Activated CD4-positive, alpha-beta memory T cell treated with anti-CD3 and anti-CD28 coated beads, Interleukin-2, amount 10 ng/mL, durations not matched to agents 7 days and 5 days (primary cell): ENCODE measurements at regions of chr15 and their contacts with region 1.

Region 1: DNA sequence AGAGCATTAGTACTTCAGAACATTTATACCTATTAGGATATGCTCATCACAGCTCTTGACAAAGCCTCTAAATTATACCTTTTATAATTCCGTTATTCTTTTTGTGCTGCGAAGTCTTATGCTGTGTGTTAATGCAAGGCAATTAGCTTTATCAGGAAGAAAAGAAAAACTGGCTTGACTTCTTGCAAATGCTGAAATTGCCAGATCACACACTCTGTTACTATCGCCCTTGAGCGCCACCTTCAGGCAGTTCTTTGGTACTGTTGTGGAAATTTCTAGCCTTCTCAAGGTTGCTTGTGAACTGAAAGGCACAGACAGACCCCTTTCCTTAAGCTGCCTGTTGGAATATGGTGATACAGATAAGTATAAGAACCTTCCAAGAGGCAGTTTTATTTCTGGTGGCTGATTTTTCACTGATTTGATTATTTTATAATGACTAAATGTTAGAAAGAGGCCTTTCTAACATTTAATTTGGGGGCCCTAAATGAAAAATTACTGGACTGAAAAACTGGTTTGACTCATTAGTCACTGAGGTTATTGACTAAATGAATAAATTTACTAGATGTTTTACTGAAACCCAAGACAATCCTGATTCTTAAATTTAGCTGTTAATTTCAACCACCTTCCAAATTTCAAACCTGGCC is 126.2 kb upstream of the RASGRP1 start:
- DNase-seq: peak; percentile 86
- H3K4me3 Mint-ChIP-seq: no peak overlapping the region
- H3K27ac Mint-ChIP-seq: peak overlapping the region; percentile 99
- H3K4me1 Mint-ChIP-seq: peaks cover 92% of the 10 kb centered on the region
- H3K27me3 Mint-ChIP-seq: no peaks in the 10 kb centered on the region

Region 2: DNA sequence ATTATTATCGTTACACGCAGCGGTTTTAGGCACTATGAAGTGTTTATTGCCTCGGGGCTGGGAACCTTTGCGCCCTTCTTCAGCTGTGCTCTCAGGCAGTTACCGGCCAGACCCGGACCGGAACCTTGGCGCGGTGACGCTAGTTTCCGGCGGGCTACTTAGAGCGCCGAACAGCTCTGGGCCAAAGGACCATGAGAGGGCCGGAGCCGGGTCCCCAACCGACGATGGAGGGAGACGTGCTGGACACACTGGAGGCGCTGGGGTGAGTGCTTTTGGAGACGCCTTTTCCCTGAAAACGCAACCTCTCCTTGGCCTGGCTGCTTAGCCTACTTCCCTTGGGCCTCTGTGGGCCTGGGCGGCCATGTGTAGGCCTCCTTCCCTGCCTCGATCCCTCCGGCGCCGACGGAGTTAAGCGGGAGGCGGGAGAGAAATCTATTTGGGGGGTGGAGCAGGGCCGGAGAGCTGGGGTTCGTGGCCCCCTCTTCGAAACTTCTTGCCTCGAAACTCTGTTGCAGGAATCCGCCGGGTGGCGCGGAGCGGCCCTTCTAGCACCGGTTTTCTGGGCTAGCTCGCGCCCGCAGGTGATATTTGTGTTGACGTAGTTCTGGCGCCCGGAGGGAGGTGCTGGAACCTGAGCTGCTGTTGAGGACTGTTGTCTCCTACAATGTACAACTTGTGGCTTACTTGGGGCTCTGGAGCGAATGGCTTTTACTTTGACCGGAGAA is 236.7 kb before region 1 on chr15 and contains the start of gene FAM98B:
- CTCF ChIA-PET with region 1: interaction called, 67 read pairs
- POLR2A ChIA-PET with region 1: interaction called, 47 read pairs
- DNase-seq: peak; percentile 89
- H3K4me3 Mint-ChIP-seq: peak within 1 kb of the TSS; percentile 93
- H3K27ac Mint-ChIP-seq: peak within 1 kb of the TSS; percentile 84
- H3K4me1 Mint-ChIP-seq: peaks cover 35% of the 10 kb centered on the region
- H3K27me3 Mint-ChIP-seq: peaks cover 14% of the 10 kb centered on the region
- total RNA-seq, gene FAM98B: 33.2 to 35.3 TPM

Region 3: DNA sequence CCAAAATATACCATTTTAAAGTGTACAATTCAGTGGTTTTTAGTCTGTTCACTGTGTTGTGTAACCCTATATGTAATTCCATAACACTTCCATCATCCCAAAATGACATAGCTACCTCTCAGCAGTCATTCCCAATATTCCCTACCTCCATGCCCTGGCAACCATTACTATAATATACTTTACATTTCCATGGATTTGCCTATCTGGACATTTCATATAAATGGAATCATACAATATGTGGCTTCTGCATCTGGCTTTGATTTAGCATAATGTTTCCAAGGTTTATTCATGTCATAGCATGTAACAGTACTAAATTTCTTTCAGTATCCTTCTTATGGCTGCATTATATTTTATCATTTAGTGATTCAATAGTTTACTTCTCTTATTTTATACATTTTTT is 211.5 kb before region 1 on chr15:
- CTCF ChIA-PET with region 1: interaction called, 79 read pairs
- POLR2A ChIA-PET with region 1: interaction called, 56 read pairs
- DNase-seq: no peak
- H3K4me3 Mint-ChIP-seq: no peak overlapping the region
- H3K27ac Mint-ChIP-seq: no peak overlapping the region
- H3K4me1 Mint-ChIP-seq: peaks cover 17% of the 10 kb centered on the region
- H3K27me3 Mint-ChIP-seq: no peaks in the 10 kb centered on the region

Region 4: DNA sequence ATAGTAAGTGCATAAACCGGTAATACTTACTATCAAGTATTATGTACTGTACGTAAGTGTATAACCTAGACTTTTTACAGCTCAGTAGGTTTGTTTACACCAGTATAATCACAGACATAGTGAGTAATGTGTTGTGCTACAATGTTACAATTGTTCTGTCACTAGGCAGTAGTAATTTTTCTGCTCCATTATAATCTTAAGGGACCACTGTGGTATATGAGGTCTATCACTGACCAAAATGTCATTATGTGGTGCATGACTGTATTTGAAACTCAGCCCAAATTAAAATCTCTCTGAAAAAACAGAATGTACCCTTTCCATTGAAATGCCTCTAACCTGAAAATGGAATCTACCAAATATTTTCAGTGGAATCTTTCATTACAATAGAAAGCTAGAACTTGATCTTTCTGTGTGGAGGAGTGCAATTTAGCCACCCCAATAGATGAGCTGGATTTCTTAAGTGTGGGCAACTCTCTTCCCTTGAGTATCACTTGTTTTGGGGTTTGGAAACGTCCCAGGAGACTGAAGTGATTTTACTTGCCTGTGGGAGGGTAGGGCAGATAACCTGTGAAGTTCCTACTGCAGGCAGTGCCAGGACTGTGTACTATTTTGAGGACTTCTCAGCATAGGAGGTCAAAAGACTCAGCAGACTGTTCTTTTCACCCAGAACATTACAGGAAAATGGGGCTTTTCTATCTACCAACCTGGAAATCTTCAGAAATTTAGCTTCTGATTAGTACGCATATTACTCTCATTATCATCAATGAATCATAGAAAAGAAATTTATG is 185.9 kb before region 1 on chr15:
- CTCF ChIA-PET with region 1: interaction called, 20 read pairs
- POLR2A ChIA-PET with region 1: interaction called, 10 read pairs
- DNase-seq: no peak
- H3K4me3 Mint-ChIP-seq: no peak overlapping the region
- H3K27ac Mint-ChIP-seq: peak overlapping the region; percentile 11
- H3K4me1 Mint-ChIP-seq: peaks cover 29% of the 10 kb centered on the region
- H3K27me3 Mint-ChIP-seq: no peaks in the 10 kb centered on the region

Region 5: DNA sequence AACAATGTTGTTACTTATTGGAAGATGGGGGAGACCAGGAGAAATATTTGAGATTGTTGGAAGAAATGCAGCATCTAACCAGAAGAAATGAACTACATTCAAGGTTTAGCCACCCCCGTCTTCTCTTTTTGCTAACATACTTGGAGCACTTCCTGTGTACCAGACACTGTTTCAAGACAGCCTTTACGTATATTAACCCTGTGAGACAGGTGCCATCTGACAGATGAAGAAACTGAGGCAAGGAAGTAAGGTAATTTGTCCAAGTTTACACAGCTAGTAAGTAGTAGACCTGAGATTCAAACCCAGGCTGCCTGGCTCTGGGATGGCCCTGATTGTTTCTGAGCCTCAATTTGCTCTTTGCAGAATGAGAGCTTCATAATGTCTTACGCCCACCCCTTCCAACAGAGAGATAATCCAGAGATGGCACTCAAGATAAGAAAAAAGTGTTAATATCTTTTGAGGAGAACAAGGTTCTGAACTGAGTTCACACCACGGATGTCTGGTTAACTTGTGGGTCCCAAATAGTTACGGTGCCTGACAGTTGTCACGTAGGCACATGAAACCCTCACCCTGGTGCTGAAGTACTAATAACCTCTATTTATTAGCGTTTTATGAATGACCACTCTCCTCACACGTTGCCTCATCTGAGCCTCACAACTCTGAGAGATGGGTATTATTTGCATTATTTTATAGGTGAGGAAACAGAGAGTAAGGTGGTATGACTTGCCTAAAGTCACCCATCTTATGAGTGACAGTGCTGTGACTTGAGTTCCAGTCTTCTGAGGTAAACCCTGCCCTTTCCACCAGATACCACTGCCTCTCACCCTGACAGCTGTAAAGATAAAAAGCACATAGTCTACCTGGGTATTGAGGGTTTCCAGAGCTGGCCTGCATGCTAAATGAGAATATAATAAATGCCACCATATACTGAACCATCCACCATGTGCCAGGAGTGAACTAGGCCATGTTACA is 152.2 kb before region 1 on chr15:
- CTCF ChIA-PET with region 1: interaction called, 12 read pairs
- POLR2A ChIA-PET with region 1: interaction called, 5 read pairs
- DNase-seq: no peak
- H3K4me3 Mint-ChIP-seq: peak overlapping the region; percentile 49
- H3K27ac Mint-ChIP-seq: peak overlapping the region; percentile 79
- H3K4me1 Mint-ChIP-seq: peaks cover 94% of the 10 kb centered on the region
- H3K27me3 Mint-ChIP-seq: no peaks in the 10 kb centered on the region

Region 6: DNA sequence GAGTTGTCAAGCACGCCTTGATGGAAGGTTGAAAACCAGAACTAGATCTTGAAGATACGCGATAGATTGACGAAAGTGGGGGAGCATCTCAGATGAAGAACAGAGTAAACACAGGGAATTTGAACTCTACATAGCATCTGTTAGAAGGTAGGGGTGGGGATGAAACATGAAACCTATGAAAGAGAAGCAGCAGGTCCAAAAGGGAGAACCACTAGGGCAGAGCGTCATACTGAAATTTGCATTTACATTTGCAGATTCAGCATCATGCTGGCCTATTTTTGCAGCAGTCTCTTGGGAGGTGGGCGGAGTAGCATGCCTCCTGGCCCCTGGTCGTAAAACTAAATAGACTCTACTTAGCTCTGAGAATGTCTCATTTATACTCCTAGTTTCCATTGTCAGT is 80.1 kb before region 1 on chr15:
- CTCF ChIA-PET with region 1: interaction called, 27 read pairs
- POLR2A ChIA-PET with region 1: interaction called, 184 read pairs
- DNase-seq: peak; percentile 65
- H3K4me3 Mint-ChIP-seq: peak overlapping the region; percentile 61
- H3K27ac Mint-ChIP-seq: peak overlapping the region; percentile 99
- H3K4me1 Mint-ChIP-seq: peaks cover 71% of the 10 kb centered on the region
- H3K27me3 Mint-ChIP-seq: no peaks in the 10 kb centered on the region